ENCODE measurements at regions of chr18 and their contacts with region 1.

Region 1: GRCh38 chr18:79988451-79989194 is at the start of gene TXNL4A:
- DNase-seq: peak; percentile 88
- H3K4me3 ChIP-seq: peak within 1 kb of the TSS; percentile 57 to 91 (median 78)
- H3K27ac ChIP-seq: peak within 1 kb of the TSS; percentile 92 to 96 (median 94)
- H3K4me1 ChIP-seq: peaks cover 4 to 28% (median 19%) of the 10 kb centered on the region in 4 donors
- H3K27me3 ChIP-seq: no peaks in the 10 kb centered on the region
- CTCF ChIP-seq: peak in 1 of 5 experiments; percentile 13
- EP300 ChIP-seq: no peak
- POLR2A ChIP-seq: peak; percentile 80
- total RNA-seq, gene TXNL4A: 4.1 to 36.8 (median 31.0) TPM

Region 2: DNA sequence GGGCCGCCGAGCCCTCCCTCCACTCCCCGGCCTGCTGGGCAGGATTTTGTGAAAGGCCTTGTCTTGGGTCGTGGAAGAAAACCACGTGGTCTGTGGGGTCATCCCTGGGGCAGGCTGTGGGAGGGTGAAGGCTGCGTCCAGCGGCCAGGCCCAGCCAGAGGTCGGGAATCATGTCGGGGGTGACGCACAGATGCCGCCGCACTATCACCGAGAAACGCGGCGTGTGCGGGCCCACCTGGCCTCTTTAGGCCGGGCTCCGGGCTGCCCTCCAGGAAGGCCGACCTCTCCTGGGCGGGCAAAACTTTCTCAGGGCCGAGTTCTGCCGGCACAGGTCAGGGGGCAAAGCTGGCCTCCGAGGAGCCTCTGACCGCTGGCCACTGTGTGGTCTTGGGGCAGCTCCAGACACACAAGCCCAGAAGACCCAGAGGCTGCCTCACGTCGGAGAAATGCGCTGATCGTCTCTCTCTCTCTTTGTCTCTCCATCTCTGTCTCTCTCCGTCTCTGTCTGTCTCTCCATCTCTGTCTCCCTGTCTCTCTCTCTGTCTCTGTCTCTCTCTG is 564.5 kb before region 1 on chr18:
- in situ Hi-C with region 1: no loop called
- intact Hi-C with region 1: no loop called
- DNase-seq: no peak
- H3K4me3 ChIP-seq: no peak overlapping the region
- H3K27ac ChIP-seq: no peak overlapping the region
- H3K4me1 ChIP-seq: peaks cover 0 to 5% (median 0%) of the 10 kb centered on the region in 4 donors
- H3K27me3 ChIP-seq: no peaks in the 10 kb centered on the region
- CTCF ChIP-seq: no peak
- EP300 ChIP-seq: no peak
- POLR2A ChIP-seq: no peak

Region 3: DNA sequence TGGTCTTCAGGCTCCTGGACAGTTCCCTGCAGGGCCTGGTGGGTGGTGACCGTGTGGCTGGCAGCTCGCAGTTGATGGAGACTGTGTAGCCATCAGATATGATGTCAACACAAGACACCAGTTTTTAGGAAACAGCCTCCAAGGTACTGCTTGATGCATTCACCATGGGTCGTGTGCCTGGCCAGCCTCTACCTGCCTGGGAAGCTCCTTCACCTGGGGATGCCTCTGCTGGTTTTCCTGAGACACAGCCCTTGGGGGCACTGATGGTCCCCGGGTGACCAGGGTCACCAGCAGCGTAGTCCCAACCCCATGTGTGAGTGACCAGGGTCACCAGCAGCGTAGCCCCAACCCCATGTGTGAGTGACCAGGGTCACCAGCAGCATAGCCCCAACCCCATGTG is 224.5 kb before region 1 on chr18:
- in situ Hi-C with region 1: no loop called
- intact Hi-C with region 1: loop called (anchors 5 kb)
- DNase-seq: peak; percentile 0
- H3K4me3 ChIP-seq: no peak overlapping the region
- H3K27ac ChIP-seq: no peak overlapping the region
- H3K4me1 ChIP-seq: no peaks in the 10 kb centered on the region
- H3K27me3 ChIP-seq: no peaks in the 10 kb centered on the region
- CTCF ChIP-seq: no peak
- EP300 ChIP-seq: no peak
- POLR2A ChIP-seq: no peak

Region 4: GRCh38 chr18:79951578-79952455 is 36.8 kb before region 1 on chr18 and contains the start of gene SLC66A2:
- in situ Hi-C with region 1: no loop called
- intact Hi-C with region 1: loop called (anchors 5 kb)
- DNase-seq: peak; percentile 96
- H3K4me3 ChIP-seq: peak within 1 kb of the TSS; percentile 95 to 98 (median 97)
- H3K27ac ChIP-seq: peak within 1 kb of the TSS; percentile 85 to 98 (median 96)
- H3K4me1 ChIP-seq: peaks cover 24 to 75% (median 49%) of the 10 kb centered on the region in 4 donors
- H3K27me3 ChIP-seq: no peaks in the 10 kb centered on the region
- CTCF ChIP-seq: no peak
- EP300 ChIP-seq: no peak
- POLR2A ChIP-seq: peak; percentile 73
- total RNA-seq, gene SLC66A2: 56.5 to 183 (median 92.9) TPM

Measured in transverse colon (tissue), 4 donors.